ENCODE measurements at regions of chr11 and their contacts with region 1.

Region 1: DNA sequence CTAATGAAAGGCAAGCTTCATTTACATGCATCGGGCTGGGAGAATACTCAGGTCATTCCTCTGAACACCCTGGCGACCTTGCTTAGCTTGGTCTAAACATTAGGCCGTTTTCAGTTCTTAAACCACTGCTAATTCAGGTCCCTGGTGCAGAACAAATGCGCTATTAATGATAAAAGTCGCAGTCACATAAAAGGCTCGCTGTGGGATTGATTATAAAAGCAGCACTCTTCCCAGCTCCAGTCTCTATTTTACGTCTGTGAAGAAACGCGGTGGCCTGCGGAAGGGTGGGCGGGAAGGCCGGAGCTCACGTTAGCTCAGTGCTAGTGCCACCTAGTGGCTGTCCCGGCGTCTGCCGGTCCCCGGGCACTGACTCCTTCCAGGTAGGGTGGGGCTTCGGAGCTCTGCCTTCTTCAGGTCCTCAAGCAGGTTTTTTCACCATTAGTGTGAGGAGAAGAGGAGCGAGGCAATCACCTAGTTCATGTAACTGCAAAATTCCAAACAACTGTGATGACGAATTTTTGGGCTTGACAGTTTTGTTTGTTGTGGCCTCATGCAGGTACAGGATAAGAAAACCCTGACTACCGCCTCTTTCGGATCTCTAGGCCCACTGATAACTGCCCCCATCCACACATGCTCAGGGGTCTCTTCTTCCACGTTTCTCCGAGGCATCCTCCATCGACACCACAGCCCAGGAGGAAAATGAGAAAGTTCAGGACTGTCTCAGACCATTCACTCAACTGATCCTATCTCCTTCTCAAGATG is 66.5 kb upstream of the CLMP start:
- DNase-seq: peak; percentile 91
- H3K4me3 ChIP-seq: peak overlapping the region; percentile 68
- H3K27ac ChIP-seq: no peak overlapping the region
- H3K4me1 ChIP-seq: peaks cover 19% of the 10 kb centered on the region
- H3K27me3 ChIP-seq: no peaks in the 10 kb centered on the region

Region 2: DNA sequence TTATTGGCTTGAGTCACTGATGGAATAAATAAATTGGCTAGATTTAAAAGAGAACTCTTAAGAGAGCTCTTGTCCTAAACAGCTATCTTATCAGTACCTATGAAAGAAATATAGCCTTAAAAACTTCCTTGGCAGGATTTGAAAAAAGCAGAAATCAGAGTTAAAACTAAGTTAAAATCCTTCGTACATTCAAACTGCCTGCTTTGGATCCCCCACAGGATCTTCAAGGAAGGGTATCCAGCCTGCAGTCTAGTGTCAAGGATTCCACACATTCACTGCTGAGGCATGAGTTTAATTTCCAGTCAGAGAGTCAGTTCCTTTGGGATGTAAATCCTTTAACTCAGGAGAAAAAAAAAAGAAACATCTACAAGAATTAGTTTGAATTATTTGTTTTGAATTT is 848.9 kb before region 1 on chr11:
- in situ Hi-C with region 1: no loop called
- DNase-seq: no peak
- H3K4me3 ChIP-seq: no peak overlapping the region
- H3K27ac ChIP-seq: no peak overlapping the region
- H3K4me1 ChIP-seq: no peaks in the 10 kb centered on the region
- H3K27me3 ChIP-seq: no peaks in the 10 kb centered on the region

Region 3: GRCh38 chr11:122882857-122883645 is 378.5 kb before region 1 on chr11:
- in situ Hi-C with region 1: loop called (anchors 25 kb)
- DNase-seq: peak; percentile 88
- H3K4me3 ChIP-seq: peak overlapping the region; percentile 83
- H3K27ac ChIP-seq: peak overlapping the region; percentile 95
- H3K4me1 ChIP-seq: peaks cover 8% of the 10 kb centered on the region
- H3K27me3 ChIP-seq: no peaks in the 10 kb centered on the region

Region 4: DNA sequence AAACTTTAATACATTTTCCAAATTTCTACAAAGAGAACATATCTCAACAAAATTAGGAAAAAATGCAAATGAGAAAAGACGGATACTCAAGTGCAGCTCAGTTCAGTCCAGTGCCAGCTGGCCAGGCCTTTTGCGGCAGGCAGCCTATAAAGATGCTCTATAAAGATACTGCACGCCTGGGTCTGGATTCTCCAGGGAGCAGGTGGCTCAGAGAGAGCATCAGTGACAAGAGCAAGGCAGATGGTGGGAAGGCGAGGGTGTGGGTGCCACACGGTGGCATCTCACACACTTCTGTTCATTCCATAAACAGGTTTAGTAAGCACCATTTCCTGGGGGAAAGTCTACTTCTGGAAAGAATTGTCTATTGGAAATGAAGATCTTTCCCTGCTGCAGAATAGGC is 411.0 kb after region 1 on chr11:
- in situ Hi-C with region 1: no loop called
- DNase-seq: no peak
- H3K4me3 ChIP-seq: no peak overlapping the region
- H3K27ac ChIP-seq: no peak overlapping the region
- H3K4me1 ChIP-seq: no peaks in the 10 kb centered on the region
- H3K27me3 ChIP-seq: peaks cover 33% of the 10 kb centered on the region

Measured in GM23248 (cell line).